Head of caudate nucleus (tissue), 42 donors: ENCODE measurements at regions of chr1 and their contacts with region 1.

Region 1: GRCh38 chr1:35641233-35641866 is at the start of gene PSMB2:
- DNase-seq: peak; percentile 88 to 98 (median 95)

Region 2: DNA sequence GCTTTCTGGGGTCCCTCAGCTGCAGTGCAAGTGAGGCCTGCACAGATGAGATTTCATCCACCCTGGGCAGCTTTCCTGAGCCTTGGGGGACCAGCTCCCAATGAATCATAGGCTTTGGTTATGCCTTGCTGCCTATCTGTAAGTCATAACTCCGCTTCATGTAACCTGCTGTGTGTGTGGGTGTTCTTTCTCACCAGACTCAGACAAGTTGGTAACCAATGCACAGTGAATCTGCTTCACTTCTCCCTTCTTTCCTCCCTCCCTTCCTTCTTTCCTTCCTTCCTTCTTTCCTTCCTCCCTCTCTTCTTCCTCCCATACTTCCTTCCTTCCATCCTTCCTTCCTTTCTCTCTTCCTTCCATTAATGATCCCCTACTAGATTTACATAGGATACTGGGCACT is 34.4 kb after region 1 on chr1:
- intact Hi-C with region 1: no loop called
- DNase-seq: peak in 20 of 42 donors; percentile 1 to 66 (median 16)

Region 3: GRCh38 chr1:35715568-35716002 is 74.2 kb after region 1 on chr1:
- intact Hi-C with region 1: loop called (anchors 10 kb)
- DNase-seq: peak; percentile 59 to 93 (median 84)

Region 4: DNA sequence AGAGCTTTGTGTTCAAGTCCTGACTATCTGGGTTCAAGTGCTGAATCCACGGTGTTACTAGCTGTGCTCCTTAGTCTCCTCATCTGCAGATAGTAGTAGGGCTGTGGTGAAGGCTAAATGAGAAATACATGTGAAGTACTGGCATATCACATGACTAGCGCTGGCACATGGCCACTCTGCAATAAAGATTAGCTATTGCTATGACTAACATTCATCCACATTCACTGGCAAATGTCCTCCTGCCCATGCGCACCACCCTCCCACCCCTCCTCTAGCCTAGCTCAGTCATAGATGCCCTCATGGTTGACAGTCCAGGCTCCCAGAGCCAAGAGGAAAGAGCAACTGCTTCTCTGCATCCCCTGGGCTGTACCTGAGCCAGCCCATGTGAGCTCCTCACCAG is 492.1 kb after region 1 on chr1:
- intact Hi-C with region 1: no loop called
- DNase-seq: no peak